Posterior vena cava (tissue), 2 donors: ENCODE measurements at regions of chr15 and their contacts with region 1.

Region 1: GRCh38 chr15:71443538-71443937 is 328.3 kb downstream of the THSD4 start:
- DNase-seq: no peak

Region 2: GRCh38 chr15:70892002-70892914 is 551.3 kb before region 1 on chr15 and contains the starts of genes LRRC49 and THAP10:
- intact Hi-C with region 1: loop called in 1 of 2 experiments (anchors 5 kb)
- DNase-seq: peak; percentile 97
- total RNA-seq, gene LRRC49: 9.7 to 10.2 TPM
- total RNA-seq, gene THAP10: 1.7 to 2.1 TPM

Region 3: GRCh38 chr15:71114896-71115554 is 328.5 kb before region 1 on chr15 and contains the start of gene THSD4:
- intact Hi-C with region 1: loop called (anchors 2 to 5 kb)
- DNase-seq: peak; percentile 87
- total RNA-seq, gene THSD4: 16.3 to 18.8 TPM

Region 4: DNA sequence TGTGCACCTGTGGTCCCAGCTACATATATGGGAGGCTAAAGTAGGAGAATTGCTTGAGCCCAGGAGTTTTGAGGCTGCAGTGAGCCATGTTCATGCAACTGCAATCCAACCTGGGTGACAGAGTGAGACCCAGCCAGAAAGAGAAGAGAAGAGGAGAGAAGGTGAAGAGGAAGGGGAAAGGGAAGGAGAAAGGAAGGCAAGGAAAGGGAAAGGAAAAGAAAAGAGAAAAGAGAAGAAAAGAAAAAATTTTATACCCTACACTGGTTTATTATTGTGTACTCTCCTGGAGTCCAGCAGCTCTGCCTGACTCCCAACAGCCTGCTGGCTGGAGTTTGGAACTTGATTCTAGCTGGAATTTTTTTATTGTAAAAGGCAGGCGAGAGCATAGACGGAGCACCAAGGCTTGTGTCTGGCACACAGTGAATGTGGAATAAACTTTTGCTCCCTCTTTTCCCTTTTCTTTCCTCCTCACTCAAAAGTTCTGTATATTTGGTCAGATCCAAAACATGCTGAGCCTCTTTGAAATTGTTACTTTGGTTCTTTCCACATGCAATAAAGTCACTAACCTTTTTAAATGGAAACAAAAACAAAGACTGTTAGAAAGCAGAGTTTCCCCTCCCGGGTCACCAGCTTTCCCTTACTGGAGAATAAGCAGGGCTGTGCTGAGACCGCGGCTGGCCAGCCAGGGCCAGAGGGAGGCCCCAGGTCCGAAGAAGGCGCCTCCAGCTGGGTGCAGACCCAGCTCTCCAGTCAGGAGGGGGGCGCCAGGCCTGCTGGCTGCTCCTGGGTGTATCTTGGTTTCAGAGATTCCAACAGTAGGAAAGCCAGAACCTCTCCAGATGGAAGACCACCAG is 318.4 kb before region 1 on chr15:
- intact Hi-C with region 1: loop called in 1 of 2 experiments (anchors 5 kb)
- DNase-seq: no peak